Posterior vena cava (tissue), 2 donors: ENCODE measurements at regions of chr3 and their contacts with region 1.

Region 1: DNA sequence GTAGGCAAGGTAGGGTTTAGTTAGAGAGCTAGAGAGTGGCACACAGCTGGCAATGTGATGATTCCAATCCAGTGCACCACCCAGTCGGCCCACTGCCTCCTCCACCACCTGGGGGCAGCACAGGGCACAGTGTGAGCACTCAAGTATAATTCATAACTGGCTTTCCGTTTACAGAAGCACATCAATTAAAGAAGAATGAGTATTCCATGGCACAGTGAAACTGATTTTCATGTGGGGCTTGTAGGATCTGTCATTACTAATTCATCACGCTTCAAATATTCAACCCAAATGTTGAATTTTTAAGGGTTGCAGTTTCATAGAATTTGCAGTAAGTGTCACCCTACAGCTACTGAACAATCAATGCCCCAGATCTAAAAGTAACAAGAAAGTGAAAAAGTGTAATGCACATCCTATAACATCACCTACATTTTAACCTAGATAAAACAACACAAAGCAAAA is 149.9 kb downstream of the IGSF11 start:
- DNase-seq: peak; percentile 82

Region 2: DNA sequence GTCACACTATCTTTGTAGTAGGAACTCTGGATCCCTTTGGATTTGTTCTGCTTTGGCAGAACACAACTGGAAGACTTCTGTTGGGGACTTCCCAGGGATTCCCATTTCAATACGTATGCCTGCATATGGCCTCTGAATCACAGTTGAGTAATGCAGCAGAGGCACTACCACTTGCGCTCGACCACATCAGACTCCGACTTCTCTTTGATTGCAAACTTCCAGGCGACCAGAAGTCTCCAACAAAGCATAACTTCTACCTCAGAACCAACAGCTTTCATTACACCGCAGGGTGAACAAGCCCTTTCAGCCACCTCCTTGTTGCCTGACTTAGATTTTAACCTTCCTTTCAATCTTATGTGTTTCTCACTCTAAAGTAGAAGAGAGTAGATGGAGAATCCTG is 774.6 kb before region 1 on chr3:
- intact Hi-C with region 1: no loop called
- DNase-seq: no peak

Region 3: GRCh38 chr3:119034256-119035013 is 149.7 kb after region 1 on chr3 and contains the start of gene IGSF11:
- intact Hi-C with region 1: loop called in 1 of 2 experiments (anchors 10 kb)
- DNase-seq: peak; percentile 82
- total RNA-seq, gene IGSF11: 0.46 to 0.57 TPM

Region 4: GRCh38 chr3:119098619-119099222 is 213.9 kb after region 1 on chr3:
- intact Hi-C with region 1: loop called (anchors 10 kb)
- DNase-seq: no peak

Region 5: DNA sequence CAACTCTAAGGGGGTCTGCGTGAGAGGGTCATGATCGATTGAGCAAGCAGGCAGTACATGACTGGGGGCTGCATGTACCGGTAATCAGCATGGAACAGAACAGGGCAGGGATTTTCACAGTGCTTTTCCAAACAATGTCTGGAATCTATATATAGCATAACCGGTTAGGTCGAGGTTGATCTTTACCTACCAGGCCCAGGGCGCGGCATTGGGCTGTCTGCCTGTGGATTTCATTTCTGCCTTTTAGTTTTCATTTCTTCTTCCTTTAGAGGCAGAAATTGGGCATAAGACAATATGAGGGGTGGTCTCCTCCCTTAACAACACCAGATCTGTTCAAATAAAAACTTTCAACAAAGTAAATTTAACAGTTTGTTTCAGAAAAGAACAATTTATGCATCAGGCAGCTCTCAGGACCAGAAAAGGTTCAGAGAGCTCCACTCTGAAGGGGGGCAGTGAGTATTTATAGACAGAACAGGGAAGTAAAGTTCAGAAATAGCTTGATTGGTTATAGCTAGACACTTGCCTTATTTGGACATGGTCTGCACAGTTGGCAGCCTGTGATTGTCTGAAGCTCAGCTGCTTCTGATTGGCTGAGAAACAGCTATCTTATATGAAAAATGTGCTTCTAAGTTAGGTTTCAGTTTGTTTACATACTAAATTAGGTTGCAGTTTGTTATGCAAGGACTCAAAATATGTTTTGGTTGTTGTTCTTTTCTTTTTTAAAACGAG is 373.1 kb after region 1 on chr3:
- intact Hi-C with region 1: no loop called
- DNase-seq: no peak